Heart right ventricle (tissue), 16 donors: ENCODE measurements at regions of chr9 and their contacts with region 1.

Region 1: DNA sequence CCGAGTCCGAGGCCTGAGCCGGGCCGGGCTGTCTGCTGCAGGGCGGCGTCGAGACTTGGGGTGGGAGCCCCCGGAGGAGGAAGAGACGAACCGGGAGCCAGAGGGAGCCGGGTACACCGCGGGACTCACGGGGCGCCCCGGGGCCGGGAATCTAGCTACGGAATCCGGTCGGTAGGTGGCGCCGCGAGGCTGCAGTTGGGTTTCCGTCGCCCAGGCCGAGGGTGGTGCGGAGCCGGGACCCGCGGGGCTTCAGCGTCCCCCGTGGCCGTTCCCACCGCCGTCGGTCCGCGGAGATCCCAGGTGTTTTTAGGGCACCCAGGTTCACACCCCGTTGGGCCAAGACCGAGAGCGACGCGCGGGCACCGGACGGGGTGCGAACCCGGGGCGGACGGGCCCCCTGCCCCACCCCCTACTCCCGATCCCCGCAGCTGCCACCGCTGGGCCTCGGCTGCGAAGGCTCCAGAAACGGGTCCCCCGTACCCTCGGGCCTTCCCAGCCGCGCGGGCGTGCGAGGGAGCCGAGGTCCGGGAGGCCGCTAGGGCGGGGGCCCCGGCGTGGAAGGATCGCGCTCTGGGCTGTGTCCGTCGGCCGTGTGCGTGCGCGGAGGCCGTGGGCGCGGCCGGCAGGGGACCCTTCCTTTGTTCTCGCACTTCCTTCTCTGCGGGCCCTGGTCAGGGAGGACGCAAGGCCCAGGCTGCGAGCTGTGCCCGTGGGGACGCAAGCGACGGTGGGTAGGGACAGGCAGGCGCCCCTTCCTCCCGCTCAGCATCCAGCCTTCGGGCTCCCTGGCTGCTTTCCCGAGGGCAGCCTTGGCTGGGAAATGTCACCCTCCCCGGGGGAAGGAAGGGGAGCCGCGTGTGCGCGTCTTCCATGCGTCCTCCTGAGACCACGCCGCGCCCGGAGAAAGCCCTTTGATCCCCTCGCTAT is 146.6 kb downstream of the GAPVD1 start:
- DNase-seq: peak; percentile 71 to 84
- ATAC-seq: peak; percentile 86 to 94 (median 90)
- H3K4me3 ChIP-seq: peak overlapping the region; percentile 46 to 83 (median 68)
- H3K27ac ChIP-seq: peak overlapping the region in 5 of 10 donors; percentile 29 to 76 (median 34)
- H3K4me1 ChIP-seq: peaks cover 0 to 13% (median 4%) of the 10 kb centered on the region in 9 donors
- H3K27me3 ChIP-seq: peaks cover 0 to 10% (median 3%) of the 10 kb centered on the region in 7 donors
- CTCF ChIP-seq: peak; percentile 68 to 97 (median 94)

Region 2: DNA sequence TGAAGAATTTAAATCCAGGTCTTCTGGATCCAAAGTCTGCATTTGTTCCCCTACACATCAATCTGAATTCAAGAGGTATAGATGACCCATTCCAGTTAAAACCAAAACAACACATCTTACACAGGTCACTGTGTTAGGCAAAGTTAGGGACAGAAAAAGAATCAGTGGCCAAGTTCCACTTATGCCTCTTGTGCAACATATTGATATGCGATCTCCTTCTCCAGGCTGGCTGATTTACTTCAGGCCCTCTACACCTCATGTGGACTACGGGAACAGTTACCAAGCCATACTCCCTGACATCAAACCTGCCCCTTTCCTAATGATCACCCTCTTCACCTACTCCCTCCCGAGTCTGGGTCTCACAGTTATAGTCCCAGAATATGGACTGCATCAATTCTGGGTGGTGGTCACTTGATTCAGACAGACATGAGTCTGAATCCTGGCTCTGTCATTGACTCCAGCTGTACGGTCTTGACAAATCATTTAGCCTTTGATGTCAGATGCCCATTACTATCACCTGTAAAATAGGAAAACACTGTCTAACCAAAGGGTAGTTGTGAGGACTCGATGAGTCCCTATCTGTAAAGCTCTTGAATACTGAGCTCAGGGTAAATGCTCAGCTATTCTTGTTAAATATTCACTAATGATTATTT is 493.4 kb before region 1 on chr9:
- intact Hi-C with region 1: no loop called
- DNase-seq: no peak
- ATAC-seq: no peak
- H3K4me3 ChIP-seq: no peak overlapping the region
- H3K27ac ChIP-seq: no peak overlapping the region
- H3K4me1 ChIP-seq: no peaks in the 10 kb centered on the region
- H3K27me3 ChIP-seq: no peaks in the 10 kb centered on the region
- CTCF ChIP-seq: no peak

Region 3: DNA sequence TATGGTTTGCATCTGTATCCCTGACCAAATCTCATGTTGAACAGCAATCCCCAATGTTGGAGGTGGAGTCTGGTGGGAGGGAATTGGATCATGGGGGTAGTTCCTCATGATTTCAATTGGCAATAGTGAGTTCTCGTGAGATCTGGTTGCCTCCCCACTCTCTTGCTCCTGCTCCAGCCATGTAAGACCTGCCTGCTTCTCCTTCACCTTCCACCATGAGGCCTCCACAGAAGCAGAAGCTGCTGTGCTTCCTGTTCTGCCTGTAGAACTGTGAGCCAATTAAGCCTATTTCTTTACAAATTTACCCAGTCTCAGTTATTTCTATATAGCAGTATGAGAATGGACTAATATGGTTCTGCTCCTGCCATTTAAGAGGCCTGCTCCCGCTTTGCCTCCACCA is 297.8 kb before region 1 on chr9:
- intact Hi-C with region 1: no loop called
- DNase-seq: no peak
- ATAC-seq: no peak
- H3K4me3 ChIP-seq: no peak overlapping the region
- H3K27ac ChIP-seq: no peak overlapping the region
- H3K4me1 ChIP-seq: no peaks in the 10 kb centered on the region
- H3K27me3 ChIP-seq: no peaks in the 10 kb centered on the region
- CTCF ChIP-seq: no peak

Region 4: DNA sequence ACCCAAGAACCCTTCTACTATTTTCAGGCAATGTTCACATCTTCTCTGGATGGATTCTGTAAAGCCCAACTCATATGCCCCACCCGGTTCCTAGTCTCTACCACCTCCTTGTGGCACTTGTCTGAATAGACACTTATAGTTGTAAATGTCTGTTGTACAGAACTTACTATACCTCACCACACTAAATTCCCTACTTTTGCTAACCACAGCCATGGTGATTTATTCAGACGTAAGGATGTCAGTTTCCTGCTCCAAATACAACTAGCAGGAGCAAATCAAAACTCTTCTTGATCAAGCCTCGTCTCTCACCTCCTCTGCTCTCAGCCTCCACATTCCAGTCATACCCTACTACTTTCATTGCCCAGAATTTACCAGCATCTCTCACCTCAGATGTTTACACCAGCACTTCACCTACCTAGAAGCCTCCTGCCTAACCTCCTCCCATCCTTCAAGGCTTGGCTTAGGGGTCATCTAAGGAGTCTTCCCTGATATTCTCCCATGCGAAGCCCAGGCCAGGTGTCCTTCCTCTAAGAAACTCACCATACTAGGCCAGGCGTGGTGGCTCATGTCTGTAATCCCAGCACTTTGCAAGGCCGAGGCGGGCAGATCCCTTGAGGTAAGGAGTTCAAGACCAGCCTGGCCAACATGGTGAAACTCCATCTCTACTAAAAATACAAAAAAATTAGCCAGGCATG is 223.3 kb after region 1 on chr9:
- intact Hi-C with region 1: loop called in 8 of 10 experiments (anchors 1 to 10 kb)
- DNase-seq: no peak
- ATAC-seq: peak; percentile 42 to 77 (median 68)
- H3K4me3 ChIP-seq: no peak overlapping the region
- H3K27ac ChIP-seq: peak overlapping the region in 1 of 10 donors; percentile 80
- H3K4me1 ChIP-seq: peaks cover 0 to 80% (median 31%) of the 10 kb centered on the region in 9 donors
- H3K27me3 ChIP-seq: no peaks in the 10 kb centered on the region
- CTCF ChIP-seq: peak; percentile 23 to 74 (median 63)

Region 5: DNA sequence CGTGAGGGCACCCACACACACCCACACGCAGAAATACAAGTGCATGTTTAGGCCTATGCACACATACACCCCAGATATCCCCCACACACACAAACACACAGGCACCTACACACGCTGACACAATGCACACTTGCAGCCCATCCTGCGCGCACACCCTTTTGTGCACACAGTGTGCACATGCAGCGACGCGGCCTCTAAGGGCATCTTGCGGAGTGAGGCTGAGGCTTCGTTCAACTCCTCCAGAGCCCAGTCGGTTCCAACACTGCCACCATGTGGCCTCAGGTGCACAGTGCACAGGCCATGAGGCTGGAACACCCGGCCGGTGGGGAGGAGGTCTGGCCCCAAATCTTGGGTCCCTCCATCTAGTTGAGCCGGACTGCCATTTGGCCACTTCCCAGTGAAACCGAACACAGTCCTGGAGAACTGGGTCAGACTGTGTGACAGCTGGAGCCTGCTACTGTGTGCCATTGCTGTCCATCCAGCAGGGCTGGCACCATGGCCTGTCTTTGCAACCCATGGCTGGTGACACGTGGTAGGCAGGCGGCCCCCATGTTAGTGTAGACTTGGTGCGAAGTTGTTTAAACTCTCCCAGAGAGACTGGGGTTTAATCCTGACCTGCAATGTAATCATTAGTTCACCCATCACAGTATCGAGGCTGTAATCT is 820.7 kb after region 1 on chr9:
- intact Hi-C with region 1: loop called (anchors 1 to 5 kb)
- DNase-seq: peak; percentile 59 to 71
- ATAC-seq: peak; percentile 87 to 95 (median 90)
- H3K4me3 ChIP-seq: no peak overlapping the region
- H3K27ac ChIP-seq: no peak overlapping the region
- H3K4me1 ChIP-seq: peaks cover 0 to 3% (median 0%) of the 10 kb centered on the region in 9 donors
- H3K27me3 ChIP-seq: peaks cover 0 to 35% (median 14%) of the 10 kb centered on the region in 7 donors
- CTCF ChIP-seq: peak; percentile 80 to 97 (median 90)

Region 6: DNA sequence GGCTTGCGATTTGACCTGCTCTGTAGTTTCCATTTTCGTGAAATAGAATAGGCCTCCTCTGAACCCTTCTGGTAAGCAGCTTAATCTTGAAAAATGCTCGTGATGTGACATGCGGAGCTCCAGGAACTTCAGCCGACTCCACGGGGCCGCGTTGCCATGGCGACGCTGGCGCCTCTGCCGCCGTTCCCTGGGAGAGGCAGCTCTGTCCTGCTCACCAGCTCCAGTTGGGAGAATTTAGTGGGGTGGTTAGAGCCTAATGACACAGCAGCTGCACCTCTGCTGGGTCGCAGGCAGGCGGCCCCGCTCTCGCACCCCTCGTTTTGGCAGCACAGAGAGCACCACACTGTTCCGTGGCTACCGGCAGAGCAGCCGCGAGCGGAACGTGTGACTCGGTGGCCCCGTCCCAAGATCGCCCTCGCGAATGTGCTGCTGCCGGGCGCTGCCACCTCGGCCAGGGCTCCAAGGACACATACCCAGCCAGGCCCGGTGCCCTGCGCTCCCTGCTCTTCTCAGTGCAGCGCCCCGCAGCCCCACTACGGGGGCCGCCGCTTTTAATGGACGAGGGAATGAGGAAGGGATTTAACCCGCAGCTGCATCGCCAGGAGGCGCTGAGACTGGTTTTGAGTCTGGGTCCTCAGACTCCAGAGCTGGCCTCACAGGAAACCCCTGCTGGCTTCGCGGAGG is 1074.3 kb after region 1 on chr9:
- intact Hi-C with region 1: loop called in 1 of 10 experiments (anchors 10 kb)
- DNase-seq: peak in 1 of 2 donors; percentile 59
- ATAC-seq: peak in 7 of 8 donors; percentile 33 to 62 (median 50)
- H3K4me3 ChIP-seq: peak overlapping the region in 3 of 10 donors; percentile 1 to 17 (median 2)
- H3K27ac ChIP-seq: no peak overlapping the region
- H3K4me1 ChIP-seq: peaks cover 0 to under 1% (median 0%) of the 10 kb centered on the region in 9 donors
- H3K27me3 ChIP-seq: no peaks in the 10 kb centered on the region
- CTCF ChIP-seq: no peak

Region 7: GRCh38 chr9:126490871-126491567 is 1082.8 kb after region 1 on chr9:
- intact Hi-C with region 1: loop called in 4 of 10 experiments (anchors 5 to 10 kb)
- DNase-seq: peak in 1 of 2 donors; percentile 55
- ATAC-seq: peak in 5 of 8 donors; percentile 57 to 69 (median 59)
- H3K4me3 ChIP-seq: no peak overlapping the region
- H3K27ac ChIP-seq: no peak overlapping the region
- H3K4me1 ChIP-seq: peaks cover 0 to 16% (median 0%) of the 10 kb centered on the region in 9 donors
- H3K27me3 ChIP-seq: no peaks in the 10 kb centered on the region
- CTCF ChIP-seq: peak; percentile 83 to 97 (median 90)